Right cardiac atrium (tissue), 5 donors: ENCODE measurements at regions of chr12 and their contacts with region 1.

Region 1: GRCh38 chr12:100348657-100349454 is 8.0 kb upstream of the SLC17A8 start:
- DNase-seq: no peak
- ATAC-seq: peak in 1 of 2 donors; percentile 11
- H3K4me3 ChIP-seq: no peak overlapping the region
- H3K27ac ChIP-seq: no peak overlapping the region
- H3K4me1 ChIP-seq: no peaks in the 10 kb centered on the region
- H3K27me3 ChIP-seq: no peaks in the 10 kb centered on the region

Region 2: GRCh38 chr12:100554608-100555077 is 205.8 kb after region 1 on chr12:
- intact Hi-C with region 1: loop called in 2 of 4 experiments (anchors 10 kb)
- DNase-seq: no peak
- ATAC-seq: peak; percentile 84 to 85
- H3K4me3 ChIP-seq: no peak overlapping the region
- H3K27ac ChIP-seq: no peak overlapping the region
- H3K4me1 ChIP-seq: no peaks in the 10 kb centered on the region
- H3K27me3 ChIP-seq: no peaks in the 10 kb centered on the region

Region 3: GRCh38 chr12:100741084-100741711 is 392.3 kb after region 1 on chr12:
- intact Hi-C with region 1: loop called in 1 of 4 experiments (anchors 5 kb)
- DNase-seq: no peak
- ATAC-seq: no peak
- H3K4me3 ChIP-seq: no peak overlapping the region
- H3K27ac ChIP-seq: no peak overlapping the region
- H3K4me1 ChIP-seq: no peaks in the 10 kb centered on the region
- H3K27me3 ChIP-seq: no peaks in the 10 kb centered on the region